ENCODE measurements at regions of chrX and their contacts with region 1.

Region 1: GRCh38 chrX:78527263-78527662 is 131.9 kb downstream of the RTL3 start:
- DNase-seq: no peak
- H3K4me3 Mint-ChIP-seq: no peak overlapping the region
- H3K27ac Mint-ChIP-seq: peak overlapping the region; percentile 85
- H3K4me1 Mint-ChIP-seq: peaks cover 39% of the 10 kb centered on the region
- H3K27me3 Mint-ChIP-seq: no peaks in the 10 kb centered on the region

Region 2: DNA sequence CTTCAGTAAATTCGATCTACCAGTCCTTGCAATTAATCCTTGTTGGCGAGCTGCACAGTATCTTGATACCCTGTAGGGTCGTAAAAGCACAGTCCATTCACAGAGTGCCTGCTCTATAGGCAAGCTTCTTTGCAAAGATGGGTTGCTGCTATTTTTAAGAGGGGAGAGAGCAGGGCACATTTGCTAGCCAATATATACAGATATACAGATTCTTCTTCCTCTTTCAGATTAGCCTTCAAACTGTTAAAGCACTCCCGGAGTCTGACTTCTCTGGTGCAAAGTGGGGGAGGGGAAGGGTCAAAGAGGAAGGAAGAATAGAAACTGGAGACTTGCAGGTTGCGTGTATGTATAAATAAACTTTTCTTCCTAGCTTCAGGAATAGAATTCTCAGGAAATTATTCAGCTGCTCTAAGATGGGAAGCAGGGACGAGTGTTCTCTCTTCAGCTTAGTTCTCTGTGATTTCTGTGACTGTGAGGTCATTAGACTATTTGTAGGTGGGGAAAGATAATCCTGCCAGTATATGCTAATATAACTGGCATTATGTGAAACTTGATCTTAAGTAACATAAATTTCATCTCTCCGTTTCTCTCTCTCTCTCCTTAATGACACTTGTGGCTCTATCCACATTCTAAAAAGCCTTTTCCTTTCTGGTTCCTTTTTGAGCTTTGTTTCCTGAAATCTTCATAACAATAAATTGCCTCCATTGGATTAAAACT is 199.7 kb before region 1 on chrX and contains the start of gene CYSLTR1:
- intact Hi-C with region 1: no loop called
- DNase-seq: no peak
- H3K4me3 Mint-ChIP-seq: peak within 1 kb of the TSS; percentile 84
- H3K27ac Mint-ChIP-seq: peak within 1 kb of the TSS; percentile 74
- H3K4me1 Mint-ChIP-seq: peaks cover 55% of the 10 kb centered on the region
- H3K27me3 Mint-ChIP-seq: no peaks in the 10 kb centered on the region
- total RNA-seq, gene CYSLTR1: 9.7 and 10.2 TPM in 2 replicates

Region 3: DNA sequence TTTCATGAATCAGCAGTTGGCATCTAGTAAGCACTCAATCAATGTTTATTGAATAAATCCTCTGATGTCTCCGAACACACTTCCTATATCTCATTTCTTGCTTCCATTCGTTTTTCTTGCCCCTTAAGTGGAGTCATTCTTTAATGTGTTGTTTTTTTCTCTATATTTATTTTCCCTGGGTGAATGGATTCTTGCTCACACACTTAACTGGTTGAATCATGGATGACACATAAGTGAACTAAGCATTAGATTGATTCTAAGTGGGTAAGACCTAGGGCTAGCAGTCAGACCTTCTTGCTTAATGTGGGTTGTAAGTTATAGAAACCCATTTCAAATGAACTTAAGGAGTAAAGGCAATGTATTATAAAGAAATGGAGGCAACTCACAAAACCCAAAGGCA is 20.7 kb after region 1 on chrX:
- intact Hi-C with region 1: no loop called
- DNase-seq: no peak
- H3K4me3 Mint-ChIP-seq: no peak overlapping the region
- H3K27ac Mint-ChIP-seq: no peak overlapping the region
- H3K4me1 Mint-ChIP-seq: peaks cover 3% of the 10 kb centered on the region
- H3K27me3 Mint-ChIP-seq: no peaks in the 10 kb centered on the region

Region 4: DNA sequence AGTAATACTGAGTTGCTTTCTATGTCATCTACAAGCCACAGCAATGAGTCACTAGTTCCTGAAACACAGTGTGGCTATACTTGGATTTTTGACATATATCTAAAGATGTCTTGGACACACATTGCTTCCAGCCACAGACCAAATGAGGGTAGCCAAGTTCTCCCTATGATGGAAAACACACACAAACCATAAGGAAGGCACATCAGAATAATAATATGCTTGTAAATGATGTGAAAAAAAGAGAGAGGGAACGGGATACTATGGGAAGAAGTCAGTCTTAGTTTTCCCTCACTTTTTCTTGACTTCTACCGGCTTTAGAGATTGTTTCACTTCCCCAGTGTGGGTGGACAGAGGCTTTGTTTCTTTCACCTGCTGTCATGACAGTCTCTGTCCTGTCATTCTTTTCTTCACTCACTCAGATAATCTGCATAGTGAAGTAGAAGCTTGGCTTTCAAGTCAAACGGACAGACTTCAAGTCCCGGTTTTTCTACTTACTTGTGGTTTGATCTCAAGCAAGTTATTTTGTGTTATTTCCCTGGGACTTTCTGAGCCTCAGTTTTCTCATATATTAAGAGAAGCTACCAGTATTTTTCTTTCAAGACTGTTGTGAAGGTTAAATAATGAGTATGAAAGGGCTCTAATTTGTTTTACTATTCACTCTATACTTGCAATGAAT is 452.7 kb after region 1 on chrX:
- intact Hi-C with region 1: loop called (anchors 10 kb)
- DNase-seq: no peak
- H3K4me3 Mint-ChIP-seq: peak overlapping the region; percentile 69
- H3K27ac Mint-ChIP-seq: peak overlapping the region; percentile 100
- H3K4me1 Mint-ChIP-seq: peaks cover 22% of the 10 kb centered on the region
- H3K27me3 Mint-ChIP-seq: no peaks in the 10 kb centered on the region

Region 5: DNA sequence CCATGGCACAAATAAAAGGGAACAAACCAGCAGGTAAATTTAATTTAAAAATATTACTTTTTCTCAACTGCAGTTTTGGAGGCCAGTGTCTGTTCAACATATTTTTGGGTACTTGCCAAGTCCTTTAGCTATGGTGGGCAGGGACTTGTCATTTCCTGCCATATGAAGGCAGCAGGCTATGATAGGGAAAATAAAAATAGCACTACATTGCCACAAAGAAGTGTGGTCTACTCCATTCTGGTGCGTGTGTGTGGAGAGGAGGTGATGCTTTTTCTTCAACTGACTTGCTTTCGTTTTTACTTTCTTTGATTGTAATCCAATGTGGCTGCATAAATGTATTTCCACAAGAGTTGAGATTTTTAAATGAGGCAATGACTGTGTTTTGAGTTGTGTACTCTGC is 634.4 kb after region 1 on chrX:
- intact Hi-C with region 1: loop called (anchors 5 kb)
- DNase-seq: peak; percentile 43
- H3K4me3 Mint-ChIP-seq: peak overlapping the region; percentile 89
- H3K27ac Mint-ChIP-seq: peak overlapping the region; percentile 99
- H3K4me1 Mint-ChIP-seq: peaks cover 54% of the 10 kb centered on the region
- H3K27me3 Mint-ChIP-seq: no peaks in the 10 kb centered on the region

Measured in activated T-helper 2 cell treated with anti-CD3 and anti-CD28 coated beads, Interferon-gamma antibody, Interleukin-2, Interleukin-4, amounts not matched to agents 10 μg/mL and 5 μg/mL and 100 μg/mL, durations not matched to agents 14 hours and 24 hours and 36 hours (primary cell).